ENCODE measurements at regions of chr2 and their contacts with region 1.

Region 1: GRCh38 chr2:241149925-241150659 is at the start of gene PPP1R7:
- DNase-seq: peak; percentile 98
- ATAC-seq: peak; percentile 79
- H3K4me3 Mint-ChIP-seq: peak within 1 kb of the TSS; percentile 88
- H3K27ac Mint-ChIP-seq: peak within 1 kb of the TSS; percentile 91
- H3K4me1 Mint-ChIP-seq: peaks cover 51% of the 10 kb centered on the region
- H3K27me3 Mint-ChIP-seq: no peaks in the 10 kb centered on the region
- total RNA-seq, gene PPP1R7: 104 to 129 TPM

Region 2: GRCh38 chr2:240586198-240586918 is 563.7 kb before region 1 on chr2 and contains the start of gene CAPN10:
- CTCF ChIA-PET with region 1: no interaction called
- POLR2A ChIA-PET with region 1: no interaction called
- intact Hi-C with region 1: loop called in 1 of 2 experiments (anchors 1 kb)
- DNase-seq: peak; percentile 98
- ATAC-seq: peak; percentile 91
- H3K4me3 Mint-ChIP-seq: peak within 1 kb of the TSS; percentile 87
- H3K27ac Mint-ChIP-seq: peak within 1 kb of the TSS; percentile 85
- H3K4me1 Mint-ChIP-seq: peaks cover 38% of the 10 kb centered on the region
- H3K27me3 Mint-ChIP-seq: no peaks in the 10 kb centered on the region
- total RNA-seq, gene CAPN10: 22.1 to 30.2 TPM

Region 3: GRCh38 chr2:241081643-241082340 is 68.3 kb before region 1 on chr2:
- CTCF ChIA-PET with region 1: interaction called, 14 read pairs
- POLR2A ChIA-PET with region 1: no interaction called
- intact Hi-C with region 1: loop called (anchors 1 kb)
- DNase-seq: no peak
- ATAC-seq: no peak
- H3K4me3 Mint-ChIP-seq: no peak overlapping the region
- H3K27ac Mint-ChIP-seq: no peak overlapping the region
- H3K4me1 Mint-ChIP-seq: no peaks in the 10 kb centered on the region
- H3K27me3 Mint-ChIP-seq: no peaks in the 10 kb centered on the region

Region 4: GRCh38 chr2:241217320-241218031 is 67.4 kb after region 1 on chr2:
- CTCF ChIA-PET with region 1: interaction called, 3 read pairs
- POLR2A ChIA-PET with region 1: no interaction called
- intact Hi-C with region 1: loop called in 1 of 2 experiments (anchors 2 kb)
- DNase-seq: peak; percentile 60
- ATAC-seq: peak; percentile 37
- H3K4me3 Mint-ChIP-seq: peak overlapping the region; percentile 56
- H3K27ac Mint-ChIP-seq: no peak overlapping the region
- H3K4me1 Mint-ChIP-seq: peaks cover 9% of the 10 kb centered on the region
- H3K27me3 Mint-ChIP-seq: peaks cover 2% of the 10 kb centered on the region

Region 5: DNA sequence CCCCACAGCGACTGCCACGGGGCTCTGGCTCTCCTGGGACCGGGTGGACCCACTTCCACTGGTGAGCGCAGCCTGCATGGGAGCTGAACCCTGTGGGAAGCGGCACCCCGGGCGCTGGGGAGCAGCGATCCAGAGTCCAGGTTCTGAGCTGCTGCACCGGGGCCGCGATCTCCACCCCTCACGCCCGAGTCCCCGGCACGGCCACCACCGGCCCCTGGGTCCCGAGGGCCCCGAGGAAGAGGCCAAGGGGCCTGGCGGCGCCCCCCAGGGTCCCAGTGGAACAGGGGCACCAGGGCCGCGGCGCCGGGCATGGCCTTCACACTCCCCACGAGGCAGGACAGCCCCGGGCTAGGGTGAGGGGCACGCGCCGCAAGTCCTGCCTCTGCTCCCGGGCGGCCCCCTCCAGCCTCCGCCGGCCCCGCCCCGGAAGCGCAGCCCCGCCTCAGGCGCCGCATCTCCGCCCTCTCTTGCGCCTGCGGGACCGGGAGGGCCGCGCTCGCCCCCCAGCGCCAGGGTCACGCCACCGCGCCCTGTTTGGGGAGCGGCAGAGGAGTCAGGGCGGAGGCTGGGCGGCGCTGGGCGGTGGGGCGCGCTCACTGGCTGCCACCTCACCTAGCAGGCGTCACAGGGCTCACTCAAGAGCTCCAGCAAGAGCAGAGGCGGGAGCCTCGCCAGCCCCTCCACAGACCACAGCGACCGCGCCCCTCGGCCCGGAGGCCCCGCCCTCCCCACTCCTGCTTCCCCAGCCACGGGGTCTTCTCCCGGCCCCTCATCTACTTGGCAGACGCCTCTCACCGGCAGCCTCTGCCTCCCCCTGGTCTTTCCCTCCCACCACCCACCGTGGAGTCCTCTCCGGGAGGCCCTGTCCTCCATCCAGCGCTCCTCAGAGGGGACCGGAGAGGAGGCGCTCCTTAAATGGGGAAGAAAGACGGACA is 460.0 kb after region 1 on chr2:
- CTCF ChIA-PET with region 1: no interaction called
- POLR2A ChIA-PET with region 1: no interaction called
- intact Hi-C with region 1: loop called in 1 of 2 experiments (anchors 2 kb)
- DNase-seq: peak; percentile 96
- ATAC-seq: peak; percentile 100
- H3K4me3 Mint-ChIP-seq: peak overlapping the region; percentile 48
- H3K27ac Mint-ChIP-seq: peak overlapping the region; percentile 67
- H3K4me1 Mint-ChIP-seq: peaks cover 14% of the 10 kb centered on the region
- H3K27me3 Mint-ChIP-seq: no peaks in the 10 kb centered on the region

Region 6: DNA sequence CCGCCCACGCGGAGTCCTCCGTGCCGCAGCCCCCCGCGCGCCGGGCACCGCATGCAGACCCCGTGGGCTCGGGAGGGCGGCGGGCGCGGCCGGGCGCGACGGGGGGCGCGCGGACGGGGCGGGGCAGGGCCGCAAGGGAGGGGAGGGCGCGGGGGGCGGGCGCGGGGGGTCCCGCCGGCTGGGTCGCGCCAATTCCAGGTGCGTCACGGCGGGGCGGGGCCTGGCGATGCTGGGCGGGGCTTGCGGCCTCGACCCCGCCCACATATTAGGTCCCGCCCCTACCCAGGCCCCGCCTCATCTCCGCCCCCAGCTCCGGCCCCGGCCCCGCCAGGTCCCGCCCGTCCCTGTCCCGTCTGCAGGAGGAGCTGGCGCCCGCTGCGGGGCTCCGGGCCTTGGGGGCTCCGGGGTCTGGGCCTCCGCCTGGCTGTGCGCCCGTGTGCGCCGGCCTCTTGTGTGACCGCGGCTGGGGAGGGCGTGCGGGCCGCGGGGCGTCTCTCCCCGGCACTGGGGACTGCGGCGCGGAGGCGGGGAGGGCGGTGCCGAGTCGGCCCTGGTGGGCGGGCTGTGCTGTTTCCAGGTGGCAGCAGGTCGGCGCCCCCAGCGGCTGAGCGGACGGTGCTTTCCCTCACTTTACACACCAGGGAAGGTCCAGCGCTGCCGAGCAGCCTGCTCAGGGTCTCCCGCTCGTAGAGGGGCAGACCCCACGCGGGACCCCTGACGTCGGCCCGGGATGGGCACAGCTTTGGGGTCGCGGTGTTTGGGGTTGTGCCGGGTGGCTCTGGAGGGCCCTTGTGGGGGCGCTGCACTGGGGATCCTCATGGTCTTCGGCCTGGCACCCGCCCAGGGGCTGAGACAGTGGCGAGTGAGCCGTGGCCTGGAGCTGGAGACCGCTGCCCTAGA is 552.3 kb after region 1 on chr2:
- CTCF ChIA-PET with region 1: no interaction called
- POLR2A ChIA-PET with region 1: no interaction called
- intact Hi-C with region 1: loop called in 1 of 2 experiments (anchors 1 kb)
- DNase-seq: peak; percentile 94
- ATAC-seq: peak; percentile 70
- H3K4me3 Mint-ChIP-seq: peak overlapping the region; percentile 86
- H3K27ac Mint-ChIP-seq: peak overlapping the region; percentile 75
- H3K4me1 Mint-ChIP-seq: peaks cover 29% of the 10 kb centered on the region
- H3K27me3 Mint-ChIP-seq: no peaks in the 10 kb centered on the region